Posterior vena cava (tissue), 2 donors: ENCODE measurements at regions of chr2 and their contacts with region 1.

Region 1: GRCh38 chr2:127072970-127073369 is 34.0 kb downstream of the BIN1 start:
- DNase-seq: no peak

Region 2: GRCh38 chr2:127293748-127294562 is 221.0 kb after region 1 on chr2 and contains the start of gene ERCC3:
- intact Hi-C with region 1: loop called (anchors 5 to 10 kb)
- DNase-seq: peak; percentile 94
- total RNA-seq, gene ERCC3: 28.2 to 30.3 TPM

Region 3: DNA sequence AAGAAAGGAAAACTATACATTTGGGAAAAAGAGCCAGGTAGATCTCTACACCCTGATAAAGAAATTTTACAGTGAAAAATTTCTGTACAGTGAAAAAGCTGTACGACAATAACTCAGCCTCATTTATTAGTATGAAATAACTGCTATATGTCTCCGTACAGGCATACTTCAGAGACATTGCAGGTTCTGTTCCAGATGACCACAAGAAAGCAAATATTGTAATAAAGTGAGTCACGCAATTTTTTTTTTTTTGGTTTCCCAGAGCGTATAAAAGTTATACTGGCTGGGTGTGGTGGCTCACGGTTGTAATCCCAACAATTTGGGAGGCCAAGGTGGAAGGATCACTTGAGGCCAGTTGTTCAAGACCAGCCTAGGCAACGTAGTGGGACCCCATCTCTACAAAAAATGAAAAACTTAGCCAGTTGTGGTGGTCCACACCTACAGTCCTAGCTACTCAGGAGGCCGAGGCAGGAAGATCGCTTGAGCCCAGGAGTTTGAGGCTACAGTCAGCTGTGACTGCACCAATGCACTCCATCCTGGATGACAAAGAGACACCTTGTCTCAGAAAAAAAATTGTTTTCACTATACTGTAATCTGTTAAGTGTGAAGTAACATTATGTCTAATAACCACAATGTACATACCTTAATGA is 841.0 kb after region 1 on chr2:
- intact Hi-C with region 1: no loop called
- DNase-seq: no peak